Heart right ventricle (tissue), 16 donors: ENCODE measurements at regions of chr11 and their contacts with region 1.

Region 1: DNA sequence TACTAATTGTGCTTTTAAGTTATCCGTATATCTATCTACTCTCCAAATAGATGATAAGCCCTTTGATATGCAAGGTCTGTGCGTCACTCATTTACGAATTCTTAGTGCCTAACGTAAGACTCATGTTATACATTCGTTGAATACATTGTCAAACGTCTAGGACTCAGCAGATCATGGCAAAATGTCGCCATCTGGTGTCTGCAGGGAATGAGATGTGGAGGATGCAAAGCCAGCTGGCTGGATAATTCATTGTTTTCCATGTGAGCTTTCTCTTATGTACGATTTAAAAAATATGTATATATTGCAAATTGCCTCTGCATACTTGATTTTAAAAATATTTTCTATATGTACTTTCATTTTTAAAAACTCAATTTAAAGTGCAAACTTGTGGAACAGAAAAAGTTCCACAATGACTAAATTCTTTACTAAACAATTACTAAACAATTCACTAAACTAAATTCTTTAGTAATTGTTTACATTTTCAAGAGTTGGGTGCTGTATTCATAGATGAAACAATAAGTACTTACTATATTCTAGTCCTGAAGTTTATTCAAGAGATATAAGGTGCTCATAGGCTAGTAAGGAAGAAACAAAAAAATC is 33.8 kb downstream of the ZNF202 start:
- DNase-seq: peak in 1 of 2 donors; percentile 52
- ATAC-seq: peak in 5 of 8 donors; percentile 47 to 76 (median 65)
- H3K4me3 ChIP-seq: no peak overlapping the region
- H3K27ac ChIP-seq: no peak overlapping the region
- H3K4me1 ChIP-seq: peaks cover 0 to under 1% (median 0%) of the 10 kb centered on the region in 9 donors
- H3K27me3 ChIP-seq: peaks cover 0 to 7% (median 0%) of the 10 kb centered on the region in 7 donors
- CTCF ChIP-seq: peak; percentile 41 to 86 (median 74)

Region 2: GRCh38 chr11:122617297-122617696 is 1090.4 kb before region 1 on chr11:
- intact Hi-C with region 1: no loop called
- DNase-seq: no peak
- ATAC-seq: no peak
- H3K4me3 ChIP-seq: no peak overlapping the region
- H3K27ac ChIP-seq: no peak overlapping the region
- H3K4me1 ChIP-seq: no peaks in the 10 kb centered on the region
- H3K27me3 ChIP-seq: no peaks in the 10 kb centered on the region
- CTCF ChIP-seq: no peak

Region 3: GRCh38 chr11:123511037-123511870 is 196.5 kb before region 1 on chr11:
- intact Hi-C with region 1: loop called in 3 of 10 experiments (anchors 10 kb)
- DNase-seq: peak; percentile 81 to 83
- ATAC-seq: peak; percentile 86 to 94 (median 92)
- H3K4me3 ChIP-seq: no peak overlapping the region
- H3K27ac ChIP-seq: no peak overlapping the region
- H3K4me1 ChIP-seq: peaks cover 0 to 7% (median 0%) of the 10 kb centered on the region in 9 donors
- H3K27me3 ChIP-seq: no peaks in the 10 kb centered on the region
- CTCF ChIP-seq: peak; percentile 65 to 96 (median 90)

Region 4: GRCh38 chr11:123640677-123641494 is 66.8 kb before region 1 on chr11:
- intact Hi-C with region 1: loop called (anchors 1 to 5 kb)
- DNase-seq: peak; percentile 19 to 29
- ATAC-seq: peak; percentile 69 to 89 (median 77)
- H3K4me3 ChIP-seq: no peak overlapping the region
- H3K27ac ChIP-seq: no peak overlapping the region
- H3K4me1 ChIP-seq: peaks cover 0 to 5% (median 0%) of the 10 kb centered on the region in 9 donors
- H3K27me3 ChIP-seq: no peaks in the 10 kb centered on the region
- CTCF ChIP-seq: peak; percentile 47 to 86 (median 81)